Posterior vena cava (tissue), 2 donors: ENCODE measurements at regions of chr22 and their contacts with region 1.

Region 1: GRCh38 chr22:37199103-37199759 is 11.2 kb upstream of the C1QTNF6 start:
- DNase-seq: peak; percentile 100

Region 2: DNA sequence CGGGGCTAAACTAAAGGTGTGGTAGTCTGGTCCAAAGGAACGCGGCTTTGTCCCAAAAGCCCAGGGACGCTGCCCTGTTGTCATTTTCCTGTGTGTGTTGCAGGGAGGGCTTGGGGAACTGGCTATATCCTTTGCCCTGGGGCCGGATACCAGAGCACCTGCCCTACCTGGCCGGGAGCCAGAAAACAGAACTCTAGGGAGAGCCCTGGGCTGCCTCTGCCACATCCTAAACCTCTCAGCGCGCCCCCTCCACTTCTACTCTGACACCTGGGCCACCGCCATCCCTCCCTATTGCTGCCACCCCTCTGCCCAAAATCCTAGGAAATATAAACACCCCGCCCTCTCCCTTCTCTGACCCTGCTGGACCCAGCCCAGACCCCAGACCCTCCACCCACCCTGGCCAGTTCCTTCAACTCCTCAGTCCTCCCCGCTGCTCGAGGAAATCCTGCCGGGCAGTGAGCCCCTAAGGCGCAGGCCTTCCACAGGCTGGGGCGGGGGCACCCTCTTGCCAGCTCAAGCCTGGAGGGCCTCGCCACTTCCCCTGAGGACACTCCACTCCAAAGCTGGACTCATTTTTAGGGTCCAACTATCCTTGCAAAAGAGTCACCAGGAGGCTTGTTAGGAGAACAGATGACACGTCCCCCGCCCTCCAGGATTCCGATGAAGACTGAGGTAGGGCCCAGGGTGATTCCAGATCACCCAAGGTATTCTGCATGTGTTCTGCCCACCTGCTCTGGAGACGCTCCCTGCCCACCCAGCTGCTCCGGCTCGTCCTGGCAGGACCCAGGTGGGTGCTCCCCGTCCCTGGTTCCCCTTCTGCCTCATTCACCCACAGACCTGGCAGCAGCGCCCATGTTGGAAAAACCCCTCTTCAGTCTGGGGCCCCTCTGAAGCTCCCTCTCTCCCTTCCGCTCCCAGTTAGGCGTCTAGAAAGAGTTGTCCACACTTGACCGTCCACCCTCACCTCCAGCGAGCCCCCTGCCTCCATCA is 135.5 kb before region 1 on chr22:
- intact Hi-C with region 1: loop called in 1 of 2 experiments (anchors 10 kb)
- DNase-seq: no peak